ENCODE measurements at regions of chr12 and their contacts with region 1.

Region 1: GRCh38 chr12:64256166-64256800 is 34.2 kb upstream of the KICS2 start:
- DNase-seq: no peak
- ATAC-seq: peak; percentile 47

Region 2: DNA sequence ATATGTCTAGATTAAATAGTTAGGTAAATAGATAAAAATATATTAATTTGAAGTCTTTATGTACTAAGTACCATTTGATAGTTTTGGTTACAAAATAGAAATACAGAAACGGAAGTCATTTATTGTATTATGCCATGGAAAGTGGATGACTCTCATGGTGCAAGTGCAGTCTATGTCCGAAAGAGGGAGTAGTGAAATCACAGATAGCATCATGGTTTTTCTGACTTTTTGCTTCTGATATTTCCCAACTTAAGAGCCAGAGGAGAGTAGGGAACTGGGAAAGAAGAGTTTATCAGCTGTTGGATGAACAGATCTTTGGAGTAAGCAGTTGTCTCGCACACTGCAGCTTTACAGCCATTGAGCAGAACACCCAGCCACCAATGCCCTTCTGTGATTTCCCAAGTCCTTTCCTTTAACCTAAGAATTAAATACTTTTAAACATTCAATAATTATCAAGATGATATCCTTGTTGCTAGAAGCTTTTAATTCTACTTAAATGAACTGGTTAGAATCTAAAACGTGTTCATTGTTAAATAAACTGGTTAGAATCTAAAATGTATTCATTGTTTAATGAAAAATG is 430.2 kb before region 1 on chr12:
- intact Hi-C with region 1: loop called in 1 of 2 experiments (anchors 5 kb)
- DNase-seq: no peak
- ATAC-seq: peak; percentile 68

Region 3: DNA sequence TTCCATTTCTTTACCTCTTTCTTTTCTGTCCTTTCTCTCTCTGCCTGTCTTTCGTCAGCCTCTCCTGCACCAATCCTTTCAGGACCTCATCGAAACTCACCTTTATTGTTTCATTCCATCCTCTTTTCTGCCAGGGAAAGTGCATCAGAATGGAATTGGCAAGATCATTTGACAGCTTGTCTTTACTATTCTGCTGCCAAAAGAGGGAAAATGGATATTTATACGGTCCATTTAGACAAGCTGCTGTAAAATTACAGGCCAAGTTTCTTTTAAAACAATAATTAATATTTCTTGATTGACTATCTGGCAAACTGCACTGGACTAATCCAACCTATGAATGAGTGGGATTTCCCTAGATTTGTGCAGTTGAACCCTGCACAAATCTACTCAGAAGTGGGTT is 419.3 kb before region 1 on chr12:
- intact Hi-C with region 1: loop called (anchors 5 kb)
- DNase-seq: no peak
- ATAC-seq: no peak

Region 4: GRCh38 chr12:64181504-64182291 is 74.6 kb before region 1 on chr12:
- intact Hi-C with region 1: loop called in 1 of 2 experiments (anchors 10 kb)
- DNase-seq: peak; percentile 21 to 43
- ATAC-seq: peak; percentile 91

Measured in left colon (tissue), 2 donors.